GM23248 (cell line): ENCODE measurements at regions of chr21 and their contacts with region 1.

Region 1: GRCh38 chr21:46100426-46100825 is 2.5 kb downstream of the COL6A2 start:
- DNase-seq: peak; percentile 90
- H3K4me3 ChIP-seq: peak overlapping the region; percentile 85
- H3K27ac ChIP-seq: peak overlapping the region; percentile 92
- H3K4me1 ChIP-seq: peaks cover 17% of the 10 kb centered on the region
- H3K27me3 ChIP-seq: no peaks in the 10 kb centered on the region

Region 2: DNA sequence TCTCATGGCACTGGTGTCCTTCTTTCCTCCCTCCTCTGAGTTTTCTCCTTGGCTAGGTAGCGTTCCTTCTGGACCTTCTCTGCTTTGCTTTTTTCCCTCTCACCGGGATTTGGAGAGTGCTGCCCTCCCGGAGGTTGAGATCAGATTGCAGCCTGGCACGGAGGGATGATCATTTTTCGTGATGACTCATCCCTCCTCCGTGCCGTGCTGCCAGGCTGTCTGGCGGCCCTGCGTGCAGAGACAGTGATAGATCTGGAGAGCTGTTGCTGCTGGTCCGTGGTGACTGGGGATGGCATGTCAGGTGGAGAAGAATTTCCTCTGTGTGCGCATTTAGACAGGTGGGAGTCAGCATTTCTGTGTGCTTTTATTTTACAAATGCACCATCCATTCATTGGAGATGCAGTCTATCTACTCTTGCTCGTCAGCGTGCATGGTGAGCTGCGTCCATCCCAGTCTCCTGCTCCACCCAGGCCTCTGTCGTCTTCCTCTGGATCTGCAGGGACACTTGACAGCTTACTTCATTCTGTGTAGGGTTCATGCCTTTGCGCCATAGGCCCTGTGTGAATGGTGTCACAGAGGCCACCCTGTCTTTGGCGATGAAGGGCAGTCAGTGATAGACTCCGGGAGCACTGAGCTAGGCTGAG is 352.5 kb before region 1 on chr21:
- in situ Hi-C with region 1: no loop called
- DNase-seq: peak; percentile 90
- H3K4me3 ChIP-seq: no peak overlapping the region
- H3K27ac ChIP-seq: no peak overlapping the region
- H3K4me1 ChIP-seq: peaks cover 3% of the 10 kb centered on the region; the same call in 1 of the 2 replicates
- H3K27me3 ChIP-seq: no peaks in the 10 kb centered on the region

Region 3: GRCh38 chr21:45973659-45974072 is 126.8 kb before region 1 on chr21:
- in situ Hi-C with region 1: loop called (anchors 5 kb)
- DNase-seq: peak; percentile 90
- H3K4me3 ChIP-seq: peak overlapping the region; percentile 56
- H3K27ac ChIP-seq: peak overlapping the region; percentile 84
- H3K4me1 ChIP-seq: peaks cover 43% of the 10 kb centered on the region
- H3K27me3 ChIP-seq: no peaks in the 10 kb centered on the region